Heart right ventricle (tissue), 16 donors: ENCODE measurements at regions of chr4 and their contacts with region 1.

Region 1: DNA sequence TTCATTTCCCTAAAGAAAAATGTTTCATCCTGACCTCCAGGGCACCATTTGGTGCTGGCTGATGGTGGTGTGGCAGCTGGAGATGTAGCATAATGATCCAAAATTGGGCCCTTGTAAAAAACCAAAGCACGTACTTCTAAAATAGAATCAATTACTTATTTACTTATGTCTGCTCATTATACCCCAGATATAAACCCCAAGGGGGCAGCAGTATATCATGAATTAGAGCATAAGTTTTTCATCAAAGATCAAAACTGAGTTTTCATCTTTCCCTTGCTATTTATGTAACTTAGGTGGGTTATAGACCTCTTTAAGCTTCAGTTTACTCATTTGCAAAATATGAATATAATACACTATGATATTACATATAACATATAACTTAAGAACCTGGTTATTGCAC is 241.1 kb downstream of the TACR3 start:
- DNase-seq: no peak
- ATAC-seq: no peak
- H3K4me3 ChIP-seq: no peak overlapping the region
- H3K27ac ChIP-seq: no peak overlapping the region
- H3K4me1 ChIP-seq: no peaks in the 10 kb centered on the region
- H3K27me3 ChIP-seq: no peaks in the 10 kb centered on the region
- CTCF ChIP-seq: no peak

Region 2: DNA sequence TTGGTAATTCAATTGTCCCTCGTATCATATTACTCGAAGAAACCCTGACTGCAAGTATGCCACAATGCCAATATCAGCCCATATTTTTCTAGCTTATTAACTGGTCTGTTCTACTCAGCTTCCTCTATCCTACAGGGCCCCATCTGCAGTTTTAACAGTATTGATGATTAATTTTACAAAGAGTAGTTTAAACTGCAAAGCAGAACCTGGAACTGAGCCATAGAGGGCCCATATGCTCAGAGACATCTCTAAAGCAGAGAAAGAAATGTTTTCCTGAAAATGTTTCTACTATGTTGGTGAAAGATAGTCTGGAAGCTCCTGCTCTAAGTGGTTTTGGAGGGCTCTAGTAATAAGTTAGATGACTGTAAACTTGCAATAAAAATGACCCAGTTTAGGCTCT is 21.2 kb before region 1 on chr4:
- intact Hi-C with region 1: no loop called
- DNase-seq: no peak
- ATAC-seq: no peak
- H3K4me3 ChIP-seq: no peak overlapping the region
- H3K27ac ChIP-seq: no peak overlapping the region
- H3K4me1 ChIP-seq: no peaks in the 10 kb centered on the region
- H3K27me3 ChIP-seq: no peaks in the 10 kb centered on the region
- CTCF ChIP-seq: no peak

Region 3: GRCh38 chr4:103567162-103567561 is 88.4 kb after region 1 on chr4:
- intact Hi-C with region 1: no loop called
- DNase-seq: no peak
- ATAC-seq: no peak
- H3K4me3 ChIP-seq: no peak overlapping the region
- H3K27ac ChIP-seq: no peak overlapping the region
- H3K4me1 ChIP-seq: no peaks in the 10 kb centered on the region
- H3K27me3 ChIP-seq: no peaks in the 10 kb centered on the region
- CTCF ChIP-seq: no peak

Region 4: GRCh38 chr4:103786014-103786413 is 307.3 kb after region 1 on chr4:
- intact Hi-C with region 1: loop called in 1 of 10 experiments (anchors 5 kb)
- DNase-seq: no peak
- ATAC-seq: no peak
- H3K4me3 ChIP-seq: no peak overlapping the region
- H3K27ac ChIP-seq: no peak overlapping the region
- H3K4me1 ChIP-seq: no peaks in the 10 kb centered on the region
- H3K27me3 ChIP-seq: no peaks in the 10 kb centered on the region
- CTCF ChIP-seq: peak in 4 of 9 donors; percentile 11 to 34 (median 22)